Activated CD8-positive, alpha-beta memory T cell treated with anti-CD3 and anti-CD28 coated beads, Interleukin-2, amount 10 ng/mL, durations not matched to agents 7 days and 5 days (primary cell): ENCODE measurements at regions of chr15 and their contacts with region 1.

Region 1: GRCh38 chr15:77496710-77497103 is 76.0 kb downstream of the HMG20A start:
- DNase-seq: peak; percentile 78
- ATAC-seq: peak; percentile 72
- H3K4me3 Mint-ChIP-seq: no peak overlapping the region
- H3K27ac Mint-ChIP-seq: no peak overlapping the region
- H3K4me1 Mint-ChIP-seq: peaks cover 12% of the 10 kb centered on the region
- H3K27me3 Mint-ChIP-seq: no peaks in the 10 kb centered on the region

Region 2: DNA sequence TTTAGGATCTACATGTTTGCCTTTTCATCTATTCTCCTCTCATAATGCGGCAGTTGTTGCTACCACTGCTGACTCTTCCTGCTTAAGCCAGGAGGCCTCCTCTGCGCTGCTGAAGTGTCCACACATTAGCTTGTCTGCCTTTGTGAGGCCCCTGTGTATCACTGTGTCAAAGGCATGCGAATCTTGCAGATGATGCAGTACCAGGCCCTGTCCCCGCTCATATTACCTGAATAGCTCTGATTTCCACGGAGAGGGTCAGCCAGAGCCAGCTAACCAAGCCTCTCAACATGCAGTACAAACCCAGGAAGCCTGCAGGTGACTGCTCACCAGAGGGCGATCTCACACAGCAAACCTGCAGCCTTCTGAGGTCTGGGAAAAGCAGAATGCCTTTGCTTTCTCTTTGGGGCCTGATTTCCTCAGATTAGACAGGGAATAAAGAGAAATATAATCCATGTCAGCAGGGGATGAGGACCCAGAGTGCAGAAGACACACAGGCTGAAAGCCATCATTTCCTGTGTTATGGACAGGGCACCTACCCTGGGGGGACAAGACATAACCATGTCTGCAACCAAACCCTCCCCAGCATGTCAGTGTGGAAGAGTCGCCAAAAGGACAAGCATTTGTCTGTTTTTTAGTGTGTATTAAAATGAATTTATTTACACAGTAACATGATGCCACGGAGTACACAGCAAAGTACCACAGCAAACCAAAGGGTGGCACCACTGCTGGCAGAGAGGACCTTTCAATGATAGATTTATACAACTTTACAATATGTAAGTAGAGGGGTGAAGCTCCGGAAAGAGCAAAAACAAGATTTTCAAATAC is 389.0 kb before region 1 on chr15:
- CTCF ChIA-PET with region 1: interaction called, 12 read pairs
- DNase-seq: peak; percentile 66
- ATAC-seq: peak; percentile 69
- H3K4me3 Mint-ChIP-seq: no peak overlapping the region
- H3K27ac Mint-ChIP-seq: no peak overlapping the region
- H3K4me1 Mint-ChIP-seq: no peaks in the 10 kb centered on the region
- H3K27me3 Mint-ChIP-seq: no peaks in the 10 kb centered on the region

Region 3: GRCh38 chr15:77186594-77187011 is 310.1 kb before region 1 on chr15:
- CTCF ChIA-PET with region 1: interaction called, 100 read pairs
- DNase-seq: peak; percentile 45
- ATAC-seq: no peak
- H3K4me3 Mint-ChIP-seq: no peak overlapping the region
- H3K27ac Mint-ChIP-seq: no peak overlapping the region
- H3K4me1 Mint-ChIP-seq: peaks cover 47% of the 10 kb centered on the region
- H3K27me3 Mint-ChIP-seq: no peaks in the 10 kb centered on the region

Region 4: DNA sequence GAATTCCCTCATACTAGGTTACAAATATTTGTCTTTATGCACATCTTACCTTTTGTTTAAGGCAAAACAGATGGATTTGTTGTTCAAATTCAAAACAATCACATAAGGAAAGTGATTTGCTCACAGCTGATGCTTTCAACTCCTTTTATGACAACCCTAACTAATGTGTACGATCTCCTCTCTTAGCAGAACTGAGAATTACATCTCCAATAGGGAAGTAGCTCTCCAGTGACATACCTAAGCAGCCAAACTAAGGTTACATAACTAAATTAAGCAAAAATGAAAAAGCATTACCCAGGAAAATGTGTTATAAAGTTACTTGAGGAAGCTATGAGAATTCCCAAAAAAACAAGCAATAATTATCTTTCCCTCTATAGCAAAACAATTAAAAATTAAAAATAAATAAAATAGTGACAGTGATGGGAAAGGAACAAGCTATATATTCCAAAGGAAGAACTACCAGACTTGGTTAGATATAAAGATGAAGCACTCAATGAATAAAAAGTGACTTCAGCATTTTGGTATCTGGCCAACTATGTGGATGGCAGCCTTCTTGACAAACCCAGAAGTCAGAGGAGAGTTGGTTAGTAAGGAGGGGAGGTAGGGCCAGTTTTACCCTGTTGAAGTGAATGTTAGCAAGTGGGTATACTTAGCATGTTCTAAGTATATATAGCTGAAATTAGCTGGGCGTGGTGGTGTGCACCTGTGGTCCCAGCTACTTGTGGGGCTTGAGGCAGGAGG is 109.2 kb before region 1 on chr15:
- CTCF ChIA-PET with region 1: no interaction called
- DNase-seq: no peak
- ATAC-seq: no peak
- H3K4me3 Mint-ChIP-seq: no peak overlapping the region
- H3K27ac Mint-ChIP-seq: no peak overlapping the region
- H3K4me1 Mint-ChIP-seq: peaks cover 19% of the 10 kb centered on the region
- H3K27me3 Mint-ChIP-seq: no peaks in the 10 kb centered on the region